Activated T-helper 1 cell treated with anti-CD3 and anti-CD28 coated beads, Interleukin-12 subunit alpha, Interleukin-12 subunit beta, Interleukin-2, Interleukin-4 antibody, amounts not matched to agents 30 ng/mL and 10 ng/mL and 1 ng/mL, durations not matched to agents 14 hours and 24 hours and 36 hours (primary cell): ENCODE measurements at regions of chr9 and their contacts with region 1.

Region 1: DNA sequence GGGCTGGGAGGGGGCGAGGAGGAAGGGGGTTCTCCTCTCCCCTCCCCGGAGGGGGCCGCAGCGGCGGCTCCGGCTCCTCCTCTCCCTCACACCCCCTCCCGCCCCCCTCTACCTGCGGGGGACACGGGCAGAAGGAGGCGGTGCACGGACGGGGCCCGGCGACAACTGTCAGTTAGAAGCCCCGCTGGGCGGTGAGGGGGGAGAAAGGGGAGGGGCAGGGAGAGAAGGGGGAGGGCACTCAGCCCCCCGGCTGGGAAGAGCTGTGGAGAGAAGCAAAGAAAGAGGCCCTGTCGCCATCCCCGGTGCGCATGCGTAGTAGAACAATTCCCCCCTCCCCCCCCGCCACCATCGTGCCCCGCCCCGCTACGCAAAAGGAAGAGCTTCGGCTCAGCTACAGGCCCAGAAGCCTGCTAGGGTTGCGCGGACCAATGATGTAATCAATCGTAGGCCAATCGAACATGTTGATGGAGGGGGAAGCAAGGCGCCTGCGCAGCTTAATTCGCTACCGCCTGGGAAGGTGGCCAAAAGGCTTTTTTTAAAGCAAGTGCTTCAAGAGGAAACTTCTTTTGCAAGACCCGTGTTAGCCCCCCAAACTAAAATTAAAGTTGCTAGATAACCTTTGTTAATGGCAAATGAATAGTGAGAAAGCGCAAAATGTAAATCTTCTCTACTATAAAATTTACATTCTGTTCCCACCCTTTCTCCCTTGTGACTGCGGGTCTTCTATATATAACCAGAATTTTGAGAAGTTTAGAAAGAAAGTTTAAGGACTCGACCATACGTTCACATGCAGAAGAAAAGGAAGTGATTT is 7.0 kb downstream of the RANBP6 start:
- DNase-seq: peak; percentile 91
- H3K4me3 Mint-ChIP-seq: peak overlapping the region; percentile 73
- H3K27ac Mint-ChIP-seq: peak overlapping the region; percentile 65
- H3K4me1 Mint-ChIP-seq: peaks cover 62% of the 10 kb centered on the region
- H3K27me3 Mint-ChIP-seq: no peaks in the 10 kb centered on the region

Region 2: DNA sequence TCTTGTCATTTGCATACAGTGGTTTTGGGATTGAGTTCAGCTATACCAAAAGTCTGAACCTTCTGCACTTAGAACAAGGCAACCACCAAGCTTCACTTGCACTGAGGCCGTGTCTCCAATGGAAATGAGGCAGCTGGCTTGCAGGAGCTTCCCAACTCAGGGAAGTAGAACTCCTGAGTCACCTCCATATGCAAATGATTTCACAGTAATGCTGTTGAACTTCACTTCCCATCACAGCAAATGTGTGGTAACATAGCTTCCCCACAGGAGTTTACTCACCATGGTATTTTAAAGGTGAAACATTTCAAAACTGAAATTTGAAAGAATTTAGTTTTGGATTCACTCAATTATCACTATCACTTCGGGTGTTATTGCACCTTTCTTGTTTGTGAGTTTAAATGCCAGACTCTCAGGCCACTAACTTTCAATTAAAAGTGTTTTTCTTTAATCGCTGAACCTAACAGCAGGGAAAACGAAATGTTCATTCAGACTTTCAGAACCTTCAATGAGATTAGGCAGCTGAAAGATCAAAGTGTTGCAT is 549.0 kb before region 1 on chr9:
- intact Hi-C with region 1: loop called (anchors 5 kb)
- DNase-seq: no peak
- H3K4me3 Mint-ChIP-seq: peak overlapping the region; percentile 76
- H3K27ac Mint-ChIP-seq: peak overlapping the region; percentile 88
- H3K4me1 Mint-ChIP-seq: peaks cover 70% of the 10 kb centered on the region
- H3K27me3 Mint-ChIP-seq: no peaks in the 10 kb centered on the region

Region 3: DNA sequence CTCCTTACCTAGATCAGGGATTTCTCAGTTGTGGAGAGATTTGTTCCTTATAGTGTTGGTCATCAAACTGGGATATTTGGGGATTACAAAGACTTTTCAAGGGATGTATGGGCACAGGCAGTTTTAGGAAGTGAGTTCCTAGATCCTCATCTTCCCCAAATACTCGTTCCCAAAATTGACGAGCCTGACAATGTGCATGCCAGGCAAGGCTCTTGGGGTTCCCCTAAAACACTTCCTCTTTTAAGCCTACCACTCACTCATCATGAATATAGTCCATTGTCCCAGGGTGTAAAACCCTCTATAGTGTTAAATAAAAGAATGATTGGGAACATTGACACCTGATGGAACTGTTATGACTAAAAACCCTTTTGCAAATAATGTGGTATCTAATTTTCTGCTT is 471.7 kb before region 1 on chr9:
- intact Hi-C with region 1: no loop called
- DNase-seq: no peak
- H3K4me3 Mint-ChIP-seq: no peak overlapping the region
- H3K27ac Mint-ChIP-seq: no peak overlapping the region
- H3K4me1 Mint-ChIP-seq: peaks cover 62% of the 10 kb centered on the region
- H3K27me3 Mint-ChIP-seq: no peaks in the 10 kb centered on the region

Region 4: DNA sequence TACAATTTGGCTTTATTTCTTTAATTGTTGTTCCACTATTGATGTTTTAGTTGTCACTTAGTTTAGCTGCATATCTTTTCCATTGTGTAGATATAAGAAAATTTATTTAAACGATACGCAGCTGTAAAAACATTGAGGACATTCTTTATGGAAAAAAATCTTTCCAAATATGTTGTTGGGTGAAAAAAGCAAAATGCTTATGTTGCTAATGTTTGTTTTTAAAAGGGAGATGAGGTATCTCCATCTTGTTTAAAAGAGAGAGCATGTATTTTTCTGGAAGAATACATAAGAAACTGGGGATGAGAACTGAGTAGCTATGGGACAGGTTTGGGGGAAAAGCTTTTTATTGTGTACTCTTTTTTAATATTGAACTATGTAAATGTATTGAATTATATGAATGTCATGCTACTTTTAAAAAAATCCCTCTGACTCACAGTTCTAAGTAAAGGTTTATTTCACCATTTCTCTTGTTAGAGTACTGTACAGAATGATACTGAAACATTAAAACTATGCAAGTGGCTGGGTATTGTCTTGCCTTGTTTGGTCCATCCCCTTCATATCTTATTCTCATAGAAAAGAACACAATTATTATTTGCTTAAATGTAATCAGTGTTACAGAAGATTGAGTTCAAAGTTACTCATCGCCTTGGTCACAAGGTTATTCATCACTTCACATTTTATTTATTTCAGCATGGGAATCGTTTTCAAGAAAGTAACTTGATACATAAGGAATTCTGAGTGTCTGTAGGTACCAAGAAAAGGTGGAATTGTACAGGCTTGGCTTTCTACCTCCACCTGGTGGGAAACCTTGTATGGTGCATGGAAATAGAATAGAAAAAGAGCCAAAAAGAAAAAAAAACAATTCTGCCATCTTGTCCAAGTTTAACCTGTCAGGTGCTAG is 293.6 kb before region 1 on chr9:
- intact Hi-C with region 1: no loop called
- DNase-seq: no peak
- H3K4me3 Mint-ChIP-seq: no peak overlapping the region
- H3K27ac Mint-ChIP-seq: no peak overlapping the region
- H3K4me1 Mint-ChIP-seq: peaks cover 4% of the 10 kb centered on the region
- H3K27me3 Mint-ChIP-seq: no peaks in the 10 kb centered on the region

Region 5: DNA sequence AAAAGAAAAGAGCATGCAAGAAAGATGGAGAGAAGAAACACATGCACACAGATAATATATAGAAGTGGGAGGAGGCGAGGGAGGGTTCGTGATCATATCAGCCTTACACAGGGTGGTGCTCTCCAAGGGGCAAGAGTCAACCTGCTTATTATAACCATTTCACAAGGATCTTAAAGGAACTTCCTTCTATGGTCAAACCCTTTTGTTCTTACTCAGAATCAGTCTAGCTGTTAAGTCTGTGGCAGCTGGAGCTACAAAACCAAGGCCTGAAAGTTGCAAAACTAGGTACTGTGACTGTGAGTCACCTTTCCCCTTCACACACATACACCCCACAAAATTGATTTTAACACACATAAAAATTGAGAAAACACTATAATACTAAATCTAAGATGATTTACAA is 156.9 kb before region 1 on chr9:
- intact Hi-C with region 1: loop called (anchors 2 kb)
- DNase-seq: peak; percentile 49
- H3K4me3 Mint-ChIP-seq: peak overlapping the region; percentile 28
- H3K27ac Mint-ChIP-seq: peak overlapping the region; percentile 68
- H3K4me1 Mint-ChIP-seq: peaks cover 69% of the 10 kb centered on the region
- H3K27me3 Mint-ChIP-seq: no peaks in the 10 kb centered on the region

Region 6: GRCh38 chr9:5949103-5949699 is 59.2 kb before region 1 on chr9:
- intact Hi-C with region 1: loop called (anchors 2 kb)
- DNase-seq: peak; percentile 8
- H3K4me3 Mint-ChIP-seq: peak overlapping the region; percentile 48
- H3K27ac Mint-ChIP-seq: no peak overlapping the region
- H3K4me1 Mint-ChIP-seq: peaks cover 35% of the 10 kb centered on the region
- H3K27me3 Mint-ChIP-seq: no peaks in the 10 kb centered on the region

Region 7: GRCh38 chr9:5988265-5988664 is 20.1 kb before region 1 on chr9:
- intact Hi-C with region 1: no loop called
- DNase-seq: no peak
- H3K4me3 Mint-ChIP-seq: no peak overlapping the region
- H3K27ac Mint-ChIP-seq: no peak overlapping the region
- H3K4me1 Mint-ChIP-seq: peaks cover 4% of the 10 kb centered on the region
- H3K27me3 Mint-ChIP-seq: no peaks in the 10 kb centered on the region

Region 8: GRCh38 chr9:6412487-6413364 is 404.4 kb after region 1 on chr9 and contains the start of gene UHRF2:
- intact Hi-C with region 1: loop called (anchors 1 kb)
- DNase-seq: peak; percentile 97
- H3K4me3 Mint-ChIP-seq: peak within 1 kb of the TSS; percentile 89
- H3K27ac Mint-ChIP-seq: peak within 1 kb of the TSS; percentile 92
- H3K4me1 Mint-ChIP-seq: peaks cover 27% of the 10 kb centered on the region
- H3K27me3 Mint-ChIP-seq: no peaks in the 10 kb centered on the region
- total RNA-seq, gene UHRF2: 73.0 and 77.3 TPM in 2 replicates

Region 9: DNA sequence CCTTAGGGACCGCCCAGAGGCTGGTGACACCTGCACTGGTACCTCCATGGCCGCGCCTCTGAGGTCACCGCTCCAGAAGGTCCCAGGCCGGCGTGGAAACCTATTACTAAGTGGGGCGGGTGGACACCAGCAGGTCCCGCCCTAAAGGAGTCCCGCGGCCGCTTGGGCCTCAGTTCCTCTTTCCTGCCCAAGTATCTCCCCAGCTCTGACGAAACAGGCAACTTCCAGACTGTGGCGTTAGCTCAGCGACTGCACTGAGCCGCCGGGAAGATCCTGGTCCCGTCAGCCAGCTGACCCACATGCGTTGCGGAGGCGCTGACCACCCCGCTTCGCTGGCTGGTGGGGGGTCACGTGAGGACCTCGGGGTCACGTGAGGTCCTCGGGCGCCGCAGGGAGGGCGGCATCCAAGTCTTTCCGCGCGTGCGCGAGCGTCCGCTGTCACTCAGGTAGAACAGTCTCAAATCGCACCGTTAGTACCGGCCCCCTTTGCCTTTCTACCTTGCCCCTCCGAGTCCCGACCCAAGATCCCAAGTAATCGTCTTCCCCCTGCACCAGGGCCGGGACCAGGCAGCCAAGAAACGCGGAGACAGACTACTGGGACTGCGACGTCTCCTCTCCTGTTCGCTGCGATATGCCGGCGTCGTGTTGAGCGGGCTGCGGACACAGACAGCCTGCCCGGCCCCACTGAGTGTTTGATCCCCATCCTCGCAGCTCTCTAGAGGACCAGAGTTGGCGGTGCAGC is 695.7 kb after region 1 on chr9:
- intact Hi-C with region 1: loop called (anchors 5 kb)
- DNase-seq: peak; percentile 84
- H3K4me3 Mint-ChIP-seq: peak overlapping the region; percentile 89
- H3K27ac Mint-ChIP-seq: peak overlapping the region; percentile 91
- H3K4me1 Mint-ChIP-seq: peaks cover 14% of the 10 kb centered on the region
- H3K27me3 Mint-ChIP-seq: peaks cover 4% of the 10 kb centered on the region